B cell (primary cell): ENCODE measurements at regions of chr6 and their contacts with region 1.

Region 1: GRCh38 chr6:37624986-37625574 is 72.6 kb downstream of the MDGA1 start:
- DNase-seq: peak; percentile 57
- ATAC-seq: peak; percentile 72
- H3K4me3 ChIP-seq: peak overlapping the region in 1 of 5 experiments; percentile 8
- H3K4me3 Mint-ChIP-seq: peak overlapping the region; percentile 59
- H3K27ac ChIP-seq: no peak overlapping the region
- H3K27ac Mint-ChIP-seq: no peak overlapping the region
- H3K4me1 ChIP-seq: peaks cover 55 to 58% of the 10 kb centered on the region in 2 donors
- H3K4me1 Mint-ChIP-seq: peaks cover 57% of the 10 kb centered on the region
- H3K27me3 ChIP-seq: peaks cover 0 to 33% (median 9%) of the 10 kb centered on the region in 4 experiments
- H3K27me3 Mint-ChIP-seq: peaks cover 5% of the 10 kb centered on the region
- CTCF ChIP-seq: no peak

Region 2: DNA sequence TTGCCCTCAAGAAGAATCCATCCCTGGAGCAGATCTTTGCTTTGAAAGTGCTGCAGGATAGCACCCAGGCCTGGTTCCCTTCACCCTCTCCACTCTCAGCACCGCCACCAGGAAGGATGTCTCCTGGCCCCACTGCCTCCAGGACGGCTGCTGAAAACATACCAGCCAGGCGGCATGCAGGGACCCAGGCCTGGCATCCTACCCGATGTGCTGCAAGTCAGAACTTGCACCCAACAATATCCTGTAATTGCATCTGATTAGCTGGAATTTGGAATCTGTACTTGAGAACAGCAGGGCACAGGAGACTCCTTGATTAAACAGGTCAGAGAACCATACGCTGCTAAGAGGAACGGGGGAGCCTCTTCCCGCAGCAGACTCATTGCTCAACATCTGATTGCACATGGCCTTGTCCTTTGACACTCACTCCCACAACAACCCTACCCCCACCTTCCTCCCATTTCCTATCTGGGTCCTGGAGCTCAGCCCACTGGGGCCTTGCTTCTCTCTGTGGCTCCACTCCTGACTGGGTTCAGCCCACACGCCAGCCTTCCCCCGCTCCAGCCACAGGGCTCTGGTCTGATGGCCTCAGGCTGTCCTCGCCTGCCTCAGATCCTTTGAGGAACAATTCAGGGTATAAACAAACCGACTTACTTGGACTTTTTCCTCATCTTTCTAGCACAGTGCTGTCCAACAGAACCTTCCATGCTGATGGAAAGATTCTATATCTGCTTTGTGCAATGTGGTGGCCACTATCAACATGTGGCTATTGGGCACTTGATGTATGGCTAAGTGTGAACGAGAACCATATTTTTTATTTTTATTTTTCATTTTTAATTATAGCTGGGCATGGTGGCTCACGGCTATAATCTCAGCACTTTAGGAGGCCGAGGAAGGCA is 541.6 kb before region 1 on chr6:
- CTCF ChIA-PET with region 1: no interaction called
- POLR2A ChIA-PET with region 1: no interaction called
- intact Hi-C with region 1: no loop called
- DNase-seq: no peak
- ATAC-seq: no peak
- H3K4me3 ChIP-seq: no peak overlapping the region
- H3K4me3 Mint-ChIP-seq: no peak overlapping the region
- H3K27ac ChIP-seq: no peak overlapping the region
- H3K27ac Mint-ChIP-seq: no peak overlapping the region
- H3K4me1 ChIP-seq: no peaks in the 10 kb centered on the region
- H3K4me1 Mint-ChIP-seq: no peaks in the 10 kb centered on the region
- H3K27me3 ChIP-seq: peaks cover 0 to 2% (median 0%) of the 10 kb centered on the region in 4 experiments
- H3K27me3 Mint-ChIP-seq: no peaks in the 10 kb centered on the region
- CTCF ChIP-seq: no peak

Region 3: GRCh38 chr6:37679539-37680476 is 54.7 kb after region 1 on chr6:
- CTCF ChIA-PET with region 1: no interaction called
- POLR2A ChIA-PET with region 1: no interaction called
- intact Hi-C with region 1: loop called (anchors 10 kb)
- DNase-seq: peak; percentile 84
- ATAC-seq: peak; percentile 87
- H3K4me3 ChIP-seq: peak overlapping the region in 3 of 5 experiments; percentile 5 to 34 (median 12)
- H3K4me3 Mint-ChIP-seq: peak overlapping the region; percentile 82
- H3K27ac ChIP-seq: peak overlapping the region; percentile 67 to 77
- H3K27ac Mint-ChIP-seq: peak overlapping the region; percentile 94
- H3K4me1 ChIP-seq: peaks cover 24 to 42% of the 10 kb centered on the region in 2 donors
- H3K4me1 Mint-ChIP-seq: peaks cover 48% of the 10 kb centered on the region
- H3K27me3 ChIP-seq: no peaks in the 10 kb centered on the region
- H3K27me3 Mint-ChIP-seq: no peaks in the 10 kb centered on the region
- CTCF ChIP-seq: no peak